Sciatic nerve (tissue), 2 donors: ENCODE measurements at regions of chr16 and their contacts with region 1.

Region 1: GRCh38 chr16:62738666-62739460 is 702.6 kb upstream of the CDH8 start:
- DNase-seq: no peak
- ATAC-seq: no peak

Region 2: GRCh38 chr16:63553980-63554379 is 815.1 kb after region 1 on chr16:
- intact Hi-C with region 1: loop called (anchors 5 kb)
- DNase-seq: no peak
- ATAC-seq: no peak